PC-3 (cell line): ENCODE measurements at regions of chrX and their contacts with region 1.

Region 1: GRCh38 chrX:115330498-115331168 is 41.1 kb downstream of the LUZP4 start:
- DNase-seq: peak; percentile 69
- ATAC-seq: peak; percentile 78
- H3K4me3 ChIP-seq: no peak overlapping the region
- H3K27ac ChIP-seq: no peak overlapping the region
- H3K4me1 ChIP-seq: no peaks in the 10 kb centered on the region
- H3K27me3 ChIP-seq: no peaks in the 10 kb centered on the region
- CTCF ChIP-seq: peak; percentile 75

Region 2: DNA sequence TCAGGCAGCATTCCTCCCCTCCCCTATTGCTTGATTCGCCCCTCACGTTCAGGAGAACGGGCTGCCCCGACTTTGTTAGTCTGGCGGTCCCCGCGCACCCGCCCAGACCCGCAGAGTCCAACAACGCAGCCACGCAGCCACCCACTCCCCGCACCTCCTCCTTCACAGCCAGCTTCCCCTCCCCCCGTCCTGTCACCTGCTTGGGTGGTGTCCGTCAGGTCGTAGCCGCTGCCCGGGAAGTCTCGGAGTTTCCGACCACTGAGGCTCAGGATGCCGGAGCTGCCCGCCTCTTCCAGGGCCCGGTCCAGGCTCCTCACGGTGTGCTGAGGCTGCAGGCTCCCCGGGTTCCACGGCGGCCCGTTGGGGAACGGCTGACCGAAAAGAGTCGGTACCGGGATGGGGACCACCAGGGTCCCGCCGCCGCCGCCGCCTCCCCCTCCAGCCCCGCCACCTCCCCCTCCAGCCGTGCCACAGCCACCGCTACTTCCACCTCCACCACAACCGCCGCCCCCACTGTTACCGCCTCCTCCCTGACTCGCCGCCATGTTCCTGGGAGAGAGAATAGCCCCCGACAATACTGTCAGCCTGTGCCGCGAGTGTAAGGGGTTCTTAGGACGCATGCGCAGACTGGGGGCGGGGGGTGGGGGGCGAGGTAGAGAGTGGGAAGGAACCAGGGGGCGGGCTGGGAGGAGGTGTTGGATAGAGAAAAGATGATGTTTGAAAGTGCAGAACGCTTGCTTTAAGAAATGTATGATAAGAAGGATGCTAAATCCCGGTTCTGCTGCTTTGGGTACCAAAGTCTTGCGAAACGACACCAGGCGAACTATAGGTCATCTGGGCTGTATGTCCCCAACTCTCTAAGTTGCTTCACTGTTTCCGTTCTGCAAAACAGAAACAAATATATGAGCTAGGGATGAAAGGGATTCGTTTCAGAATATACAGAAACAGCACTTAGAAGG is 96.9 kb before region 1 on chrX and contains the start of gene LRCH2:
- CTCF ChIA-PET with region 1: no interaction called
- POLR2A ChIA-PET with region 1: no interaction called
- intact Hi-C with region 1: no loop called
- DNase-seq: no peak
- ATAC-seq: no peak
- H3K4me3 ChIP-seq: peak within 1 kb of the TSS; percentile 42
- H3K27ac ChIP-seq: no peak within 1 kb of the TSS
- H3K4me1 ChIP-seq: 0 out of 2 replicates have a peak, but pooled peaks cover 3% of the 10 kb centered on the region
- H3K27me3 ChIP-seq: peaks cover 60% of the 10 kb centered on the region
- CTCF ChIP-seq: no peak
- total RNA-seq, gene LRCH2: 0.11 TPM in 1 of 2 replicates, not detected in the other

Region 3: DNA sequence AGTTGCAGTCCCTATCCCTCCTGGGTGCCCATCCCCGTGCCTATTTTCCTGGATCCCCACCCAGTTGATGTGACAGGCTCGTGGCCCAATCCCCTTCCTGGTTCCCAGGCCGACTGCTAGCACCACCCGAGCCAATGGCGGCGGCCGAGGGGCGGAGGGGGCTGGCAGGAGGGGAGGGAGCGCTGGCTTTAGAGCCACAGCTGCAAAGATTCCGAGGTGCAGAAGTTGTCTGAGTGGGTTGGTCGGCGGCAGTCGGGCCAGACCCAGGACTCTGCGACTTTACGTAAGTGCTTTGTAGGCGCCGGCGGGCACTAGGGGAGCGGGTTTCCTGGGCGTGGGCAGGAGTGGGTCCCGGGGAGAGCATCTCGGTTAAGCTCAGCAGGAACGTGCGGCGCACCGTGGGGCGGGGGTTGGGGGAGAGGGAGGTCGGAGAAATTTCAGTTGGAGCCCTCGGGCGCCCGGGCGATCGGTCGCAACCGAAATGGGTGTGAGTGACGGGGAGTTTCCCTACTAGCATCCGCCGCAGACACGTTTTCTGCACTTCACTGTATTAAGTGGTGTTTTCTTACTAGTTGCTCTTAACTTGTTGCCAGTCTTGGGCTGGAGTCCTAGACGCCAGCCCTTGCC is 230.5 kb after region 1 on chrX and contains the start of gene PLS3:
- CTCF ChIA-PET with region 1: no interaction called
- POLR2A ChIA-PET with region 1: no interaction called
- intact Hi-C with region 1: loop called (anchors 1 kb)
- DNase-seq: peak; percentile 78
- ATAC-seq: peak; percentile 73
- H3K4me3 ChIP-seq: peak within 1 kb of the TSS; percentile 93
- H3K27ac ChIP-seq: peak within 1 kb of the TSS; percentile 95
- H3K4me1 ChIP-seq: peaks cover 50% of the 10 kb centered on the region
- H3K27me3 ChIP-seq: no peaks in the 10 kb centered on the region
- CTCF ChIP-seq: no peak
- total RNA-seq, gene PLS3: 248 and 267 TPM in 2 replicates

Region 4: DNA sequence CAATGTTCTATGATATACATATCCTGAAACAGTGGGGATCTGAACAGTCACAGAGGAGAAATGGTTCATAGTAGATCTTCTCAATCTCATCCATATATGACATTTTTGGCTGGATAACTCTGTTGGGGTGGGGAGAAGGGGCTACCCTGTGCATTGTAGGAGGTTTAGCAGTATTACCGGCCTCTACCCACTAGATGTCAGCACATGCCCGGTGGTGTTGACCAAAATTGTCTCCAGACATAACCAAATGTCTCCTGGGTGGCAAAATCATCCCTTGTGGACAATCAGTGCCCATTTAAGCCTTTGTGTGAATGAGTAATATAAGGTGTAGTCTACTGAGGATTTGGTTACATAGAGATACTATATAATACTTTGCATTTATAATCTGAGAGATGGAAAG is 320.3 kb after region 1 on chrX:
- CTCF ChIA-PET with region 1: no interaction called
- POLR2A ChIA-PET with region 1: no interaction called
- intact Hi-C with region 1: loop called (anchors 2 kb)
- DNase-seq: peak; percentile 52
- ATAC-seq: peak; percentile 83
- H3K4me3 ChIP-seq: no peak overlapping the region
- H3K27ac ChIP-seq: no peak overlapping the region
- H3K4me1 ChIP-seq: no peaks in the 10 kb centered on the region; the same call in 1 of the 2 replicates
- H3K27me3 ChIP-seq: no peaks in the 10 kb centered on the region
- CTCF ChIP-seq: peak; percentile 65

Region 5: GRCh38 chrX:115690511-115691216 is 360.0 kb after region 1 on chrX:
- CTCF ChIA-PET with region 1: interaction called, 3 read pairs
- POLR2A ChIA-PET with region 1: no interaction called
- intact Hi-C with region 1: loop called (anchors 2 kb)
- DNase-seq: peak; percentile 84
- ATAC-seq: peak; percentile 74
- H3K4me3 ChIP-seq: no peak overlapping the region
- H3K27ac ChIP-seq: no peak overlapping the region
- H3K4me1 ChIP-seq: peaks cover 6% of the 10 kb centered on the region; the same call in 1 of the 2 replicates
- H3K27me3 ChIP-seq: no peaks in the 10 kb centered on the region
- CTCF ChIP-seq: peak; percentile 81